CD8-positive, alpha-beta T cell (primary cell): ENCODE measurements at regions of chr3 and their contacts with region 1.

Region 1: GRCh38 chr3:124761250-124761796 is 31.1 kb downstream of the UMPS start:
- DNase-seq: peak; percentile 61 to 87 (median 81)
- ATAC-seq: peak; percentile 91
- H3K4me3 ChIP-seq: no peak overlapping the region
- H3K4me3 Mint-ChIP-seq: peak overlapping the region; percentile 69
- H3K27ac ChIP-seq: no peak overlapping the region
- H3K27ac Mint-ChIP-seq: no peak overlapping the region
- H3K4me1 ChIP-seq: no peaks in the 10 kb centered on the region
- H3K4me1 Mint-ChIP-seq: peaks cover 5% of the 10 kb centered on the region
- H3K27me3 ChIP-seq: no peaks in the 10 kb centered on the region
- H3K27me3 Mint-ChIP-seq: no peaks in the 10 kb centered on the region
- CTCF ChIP-seq: peak; percentile 86

Region 2: GRCh38 chr3:124730129-124730940 is 31.0 kb before region 1 on chr3 and contains the start of gene UMPS:
- CTCF ChIA-PET with region 1: interaction called, 4 read pairs
- POLR2A ChIA-PET with region 1: interaction called, 3 read pairs
- intact Hi-C with region 1: loop called in 1 of 2 experiments (anchors 1 kb)
- DNase-seq: peak; percentile 82 to 95 (median 93)
- ATAC-seq: peak; percentile 91
- H3K4me3 ChIP-seq: peak within 1 kb of the TSS; percentile 96 to 97
- H3K4me3 Mint-ChIP-seq: peak within 1 kb of the TSS; percentile 99
- H3K27ac ChIP-seq: peak within 1 kb of the TSS; percentile 82 to 93
- H3K27ac Mint-ChIP-seq: peak within 1 kb of the TSS; percentile 99
- H3K4me1 ChIP-seq: peaks cover 29% of the 10 kb centered on the region
- H3K4me1 Mint-ChIP-seq: peaks cover 39% of the 10 kb centered on the region
- H3K27me3 ChIP-seq: peaks cover 0 to 4% of the 10 kb centered on the region in 2 experiments
- H3K27me3 Mint-ChIP-seq: peaks cover 10% of the 10 kb centered on the region
- CTCF ChIP-seq: no peak
- total RNA-seq, gene UMPS: 16.7 to 19.8 TPM

Region 3: DNA sequence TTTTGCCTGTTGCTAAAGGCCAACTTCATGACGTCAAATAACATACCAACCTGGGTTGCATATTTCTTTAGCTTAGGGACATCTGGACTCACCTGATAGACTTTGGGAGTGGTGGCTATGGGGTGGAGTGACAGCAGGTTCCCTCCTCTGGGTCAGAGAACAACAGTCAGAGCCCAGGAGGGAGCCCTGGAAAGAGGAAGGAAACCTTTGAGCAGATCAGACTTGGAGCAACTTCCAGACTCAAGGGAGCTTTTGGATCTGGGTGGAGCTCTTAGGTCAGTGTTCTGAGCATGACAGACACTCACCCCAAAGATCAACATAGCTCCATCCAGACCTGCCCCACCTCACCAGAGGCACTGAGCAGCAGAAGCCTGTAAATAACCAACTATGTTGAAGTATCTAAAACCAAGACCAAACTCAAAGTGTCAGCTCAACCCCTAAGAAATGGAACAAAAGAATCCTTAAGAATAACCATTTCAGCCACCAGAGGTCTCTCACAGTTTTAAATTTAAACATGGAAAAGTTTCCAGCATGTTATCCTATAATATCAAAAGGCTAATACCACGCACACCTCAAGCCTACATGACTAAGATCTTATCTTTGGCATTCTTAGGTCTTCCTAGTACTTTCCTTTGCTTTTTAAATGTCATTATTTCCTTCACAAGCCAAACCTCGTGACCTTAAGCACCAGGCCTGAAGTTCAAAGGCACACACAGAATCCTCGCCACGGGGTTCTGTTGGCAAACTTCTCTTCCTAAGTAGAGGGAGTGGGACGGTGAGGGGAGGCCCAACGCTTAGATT is 25.3 kb after region 1 on chr3:
- CTCF ChIA-PET with region 1: interaction called, 15 read pairs
- POLR2A ChIA-PET with region 1: no interaction called
- intact Hi-C with region 1: no loop called
- DNase-seq: no peak
- ATAC-seq: no peak
- H3K4me3 ChIP-seq: no peak overlapping the region
- H3K4me3 Mint-ChIP-seq: no peak overlapping the region
- H3K27ac ChIP-seq: no peak overlapping the region
- H3K27ac Mint-ChIP-seq: no peak overlapping the region
- H3K4me1 ChIP-seq: no peaks in the 10 kb centered on the region
- H3K4me1 Mint-ChIP-seq: no peaks in the 10 kb centered on the region
- H3K27me3 ChIP-seq: no peaks in the 10 kb centered on the region
- H3K27me3 Mint-ChIP-seq: peaks cover 3% of the 10 kb centered on the region
- CTCF ChIP-seq: no peak

Region 4: GRCh38 chr3:124905849-124906248 is 144.5 kb after region 1 on chr3:
- CTCF ChIA-PET with region 1: interaction called, 166 read pairs
- POLR2A ChIA-PET with region 1: interaction called, 8 read pairs
- intact Hi-C with region 1: loop called in 1 of 2 experiments (anchors 1 kb)
- DNase-seq: no peak
- ATAC-seq: no peak
- H3K4me3 ChIP-seq: no peak overlapping the region
- H3K4me3 Mint-ChIP-seq: no peak overlapping the region
- H3K27ac ChIP-seq: no peak overlapping the region
- H3K27ac Mint-ChIP-seq: no peak overlapping the region
- H3K4me1 ChIP-seq: peaks cover 4% of the 10 kb centered on the region
- H3K4me1 Mint-ChIP-seq: peaks cover 4% of the 10 kb centered on the region
- H3K27me3 ChIP-seq: no peaks in the 10 kb centered on the region
- H3K27me3 Mint-ChIP-seq: peaks cover 16% of the 10 kb centered on the region
- CTCF ChIP-seq: no peak

Region 5: DNA sequence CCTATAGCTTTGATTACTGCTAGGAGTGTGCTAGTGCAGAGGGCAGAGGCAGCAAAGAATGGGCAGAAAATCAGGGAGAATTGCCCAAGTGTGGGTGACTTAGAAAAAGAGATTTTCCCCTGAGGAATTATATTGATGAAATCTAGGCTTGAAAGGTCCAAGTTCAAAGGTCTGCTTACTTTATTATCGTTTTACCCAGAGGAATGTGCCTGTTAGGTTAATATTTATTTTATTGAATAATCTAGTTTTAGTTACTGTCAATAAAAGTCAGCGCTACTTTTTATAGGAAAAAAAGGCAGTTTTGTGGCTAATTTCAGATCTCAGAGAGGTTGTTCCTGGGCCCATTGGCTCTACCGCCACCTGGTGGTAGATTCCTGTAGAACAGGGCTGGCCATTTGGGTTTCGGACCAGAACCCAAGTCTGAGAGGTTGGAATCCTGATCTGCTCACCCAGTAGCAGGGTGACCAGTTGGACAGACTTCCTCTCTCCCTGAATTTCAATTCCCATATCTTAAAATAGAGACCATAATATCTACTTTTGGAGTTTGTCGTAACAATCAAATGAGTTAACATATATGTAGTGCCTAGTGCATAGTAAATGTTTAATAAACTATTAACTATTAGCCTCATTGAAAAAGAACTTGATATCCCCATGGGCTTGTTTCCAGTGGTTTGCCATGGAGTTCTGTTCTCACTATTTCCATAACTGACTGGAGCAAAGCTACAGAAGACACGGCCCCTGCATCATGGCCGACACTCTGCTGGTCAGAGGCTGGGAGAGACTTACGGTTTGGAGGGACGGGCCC is 676.5 kb after region 1 on chr3:
- CTCF ChIA-PET with region 1: interaction called, 12 read pairs
- POLR2A ChIA-PET with region 1: no interaction called
- intact Hi-C with region 1: loop called in 1 of 2 experiments (anchors 1 kb)
- DNase-seq: peak; percentile 31 to 77 (median 64)
- ATAC-seq: peak; percentile 46
- H3K4me3 ChIP-seq: no peak overlapping the region
- H3K4me3 Mint-ChIP-seq: no peak overlapping the region
- H3K27ac ChIP-seq: no peak overlapping the region
- H3K27ac Mint-ChIP-seq: no peak overlapping the region
- H3K4me1 ChIP-seq: no peaks in the 10 kb centered on the region
- H3K4me1 Mint-ChIP-seq: no peaks in the 10 kb centered on the region
- H3K27me3 ChIP-seq: no peaks in the 10 kb centered on the region
- H3K27me3 Mint-ChIP-seq: no peaks in the 10 kb centered on the region
- CTCF ChIP-seq: peak; percentile 99